Sciatic nerve (tissue), 2 donors: ENCODE measurements at regions of chr19 and their contacts with region 1.

Region 1: GRCh38 chr19:6457958-6458694 is 1.5 kb downstream of the SLC25A23 start:
- DNase-seq: no peak
- ATAC-seq: no peak

Region 2: DNA sequence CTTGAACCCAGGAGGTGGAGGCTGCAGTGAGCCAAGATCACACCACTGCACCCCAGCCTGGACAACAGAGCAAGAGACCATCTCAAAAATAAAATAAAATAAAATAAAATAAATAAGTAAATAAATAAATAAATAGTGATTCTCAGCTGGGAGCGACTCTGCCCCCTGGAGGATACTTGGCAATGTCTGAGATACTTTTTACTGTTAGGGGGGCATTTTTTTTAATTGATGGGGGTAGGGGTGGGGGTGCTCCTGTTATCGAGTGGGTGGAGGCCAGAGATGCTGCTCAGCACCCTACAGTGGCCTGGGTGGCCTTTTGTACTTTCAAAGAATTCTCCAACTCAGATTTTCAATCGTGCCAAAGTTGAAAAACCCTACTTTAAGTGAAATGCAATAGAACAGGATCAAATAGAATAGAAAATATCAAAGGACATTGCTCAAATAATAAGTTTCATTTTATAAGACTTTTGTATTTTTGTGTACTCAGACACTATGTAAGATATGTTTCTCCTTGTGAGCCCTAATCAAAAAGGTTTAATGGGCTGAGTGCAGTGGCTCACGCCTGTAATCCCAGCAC is 103.9 kb before region 1 on chr19:
- intact Hi-C with region 1: no loop called
- DNase-seq: no peak
- ATAC-seq: no peak

Region 3: DNA sequence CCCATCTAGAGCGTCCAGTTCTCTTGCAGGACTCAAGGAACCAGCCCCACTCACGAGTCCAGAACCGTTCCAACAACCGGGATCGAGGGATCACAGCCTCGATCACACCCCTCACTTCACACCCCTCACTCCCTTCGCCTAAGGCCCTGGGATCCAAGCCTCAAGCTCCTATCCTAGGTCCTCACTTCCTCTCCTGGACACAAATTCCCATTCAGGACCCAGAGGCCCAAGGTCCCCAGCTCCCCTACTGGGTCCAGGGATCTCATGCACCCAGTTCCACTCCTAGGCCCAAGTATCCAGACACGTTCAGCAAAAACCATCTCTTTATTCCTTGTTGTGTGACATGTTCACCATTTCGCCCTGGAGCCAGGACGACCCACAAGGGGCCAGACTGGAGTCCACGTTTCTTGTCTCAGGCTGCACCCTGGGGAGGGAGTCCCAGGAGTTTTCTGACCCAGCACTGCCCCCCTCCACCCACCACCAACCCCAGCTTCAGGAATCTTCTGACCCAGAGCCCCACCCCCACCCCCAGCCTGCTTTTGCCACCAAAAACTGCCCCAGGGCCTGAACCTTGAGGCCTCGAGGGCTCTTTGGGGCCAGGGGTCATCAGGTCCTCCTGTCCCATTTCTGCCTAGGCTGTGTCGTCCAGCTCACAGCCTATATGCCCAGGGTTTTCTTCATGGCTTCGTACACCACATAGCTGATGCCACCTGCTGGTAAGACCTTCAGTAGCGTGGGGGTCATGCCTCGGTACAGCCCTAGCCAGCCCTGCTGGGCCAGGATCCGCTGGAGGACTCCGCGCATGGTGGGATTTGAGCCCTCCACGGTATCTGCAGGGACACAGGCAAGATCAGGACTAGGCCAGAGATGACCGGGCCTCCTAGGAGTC is 32.1 kb before region 1 on chr19:
- intact Hi-C with region 1: loop called (anchors 2 kb)
- DNase-seq: no peak
- ATAC-seq: no peak